ENCODE measurements at regions of chr20 and their contacts with region 1.

Region 1: GRCh38 chr20:20052074-20052970 is at the starts of genes CFAP61 and CRNKL1:
- DNase-seq: peak; percentile 96
- ATAC-seq: peak; percentile 95
- H3K4me3 ChIP-seq: peak within 1 kb of the TSS; percentile 83
- H3K27ac ChIP-seq: peak within 1 kb of the TSS; percentile 87
- H3K4me1 ChIP-seq: no peaks in the 10 kb centered on the region
- H3K27me3 ChIP-seq: no peaks in the 10 kb centered on the region
- CTCF ChIP-seq: no peak
- EP300 ChIP-seq: no peak
- POLR2A ChIP-seq: peak; percentile 90
- RAD21 ChIP-seq: no peak
- polyA plus RNA-seq, gene CFAP61: not detected
- polyA plus RNA-seq, gene CRNKL1: 9.5 to 18.6 TPM

Region 2: GRCh38 chr20:20034486-20034885 is 17.8 kb before region 1 on chr20:
- CTCF ChIA-PET with region 1: interaction called, 14 read pairs
- POLR2A ChIA-PET with region 1: no interaction called
- RAD21 ChIA-PET with region 1: no interaction called
- SMC1A ChIA-PET with region 1: interaction called, 3 read pairs
- in situ Hi-C with region 1: no loop called
- intact Hi-C with region 1: no loop called
- DNase-seq: no peak
- ATAC-seq: no peak
- H3K4me3 ChIP-seq: no peak overlapping the region
- H3K27ac ChIP-seq: no peak overlapping the region
- H3K4me1 ChIP-seq: no peaks in the 10 kb centered on the region
- H3K27me3 ChIP-seq: no peaks in the 10 kb centered on the region
- CTCF ChIP-seq: no peak
- EP300 ChIP-seq: no peak
- POLR2A ChIP-seq: no peak
- RAD21 ChIP-seq: no peak